ENCODE measurements at regions of chr7 and their contacts with region 1.

Region 1: DNA sequence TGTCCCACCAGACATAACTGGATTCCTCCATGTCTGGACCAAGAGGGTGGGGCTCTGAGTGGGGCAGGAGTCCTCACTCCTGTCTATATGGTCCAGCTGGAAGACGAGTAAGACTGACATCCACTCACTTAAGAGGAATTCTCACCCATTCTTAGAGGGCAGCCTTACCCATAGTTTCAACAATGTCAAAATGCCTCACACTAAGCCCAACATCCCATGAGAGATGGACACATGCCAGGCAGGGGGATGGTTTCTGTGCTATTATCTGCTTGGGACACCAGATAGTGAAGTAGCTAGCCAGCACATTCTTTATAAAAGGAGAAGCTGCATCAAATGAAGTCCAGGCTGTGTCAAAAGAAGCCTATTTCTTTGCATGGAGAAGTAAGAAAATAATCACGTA is 4.7 kb upstream of the LANCL2 start:
- DNase-seq: no peak

Region 2: DNA sequence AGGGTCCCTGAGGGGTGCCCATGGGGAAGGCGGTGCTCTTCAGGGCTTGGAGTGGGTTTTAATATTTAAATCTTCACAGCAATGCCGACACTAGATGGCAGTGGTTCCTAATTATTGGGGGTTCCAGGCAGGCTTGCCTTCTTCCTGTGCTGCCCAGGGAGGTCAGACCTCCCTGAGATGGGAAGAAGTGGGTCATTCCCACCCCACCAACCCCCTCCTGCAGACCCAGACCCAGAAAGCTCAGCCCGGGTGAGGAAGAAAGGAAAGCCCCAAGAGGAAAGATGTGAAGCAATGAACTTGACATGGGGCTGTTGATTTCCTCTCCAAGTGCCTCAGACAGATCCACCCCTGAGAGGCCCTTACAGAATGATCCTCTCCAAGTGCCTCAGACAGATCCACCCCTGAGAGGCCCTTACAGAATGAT is 80.4 kb before region 1 on chr7:
- intact Hi-C with region 1: loop called (anchors 5 kb)
- DNase-seq: no peak